ENCODE measurements at regions of chrX and their contacts with region 1.

Region 1: GRCh38 chrX:2643880-2644279 is 47.2 kb upstream of the CD99 start:
- DNase-seq: no peak
- H3K4me3 ChIP-seq: no peak overlapping the region
- H3K27ac ChIP-seq: no peak overlapping the region
- H3K4me1 ChIP-seq: no peaks in the 10 kb centered on the region
- H3K27me3 ChIP-seq: no peaks in the 10 kb centered on the region
- CTCF ChIP-seq: no peak

Region 2: GRCh38 chrX:2451501-2452316 is 192.2 kb before region 1 on chrX:
- intact Hi-C with region 1: no loop called
- DNase-seq: no peak
- H3K4me3 ChIP-seq: no peak overlapping the region
- H3K27ac ChIP-seq: no peak overlapping the region
- H3K4me1 ChIP-seq: no peaks in the 10 kb centered on the region
- H3K27me3 ChIP-seq: no peaks in the 10 kb centered on the region
- CTCF ChIP-seq: no peak

Region 3: GRCh38 chrX:2577844-2578506 is 65.9 kb before region 1 on chrX:
- intact Hi-C with region 1: no loop called
- DNase-seq: no peak
- H3K4me3 ChIP-seq: no peak overlapping the region
- H3K27ac ChIP-seq: no peak overlapping the region
- H3K4me1 ChIP-seq: no peaks in the 10 kb centered on the region
- H3K27me3 ChIP-seq: peaks cover 4% of the 10 kb centered on the region
- CTCF ChIP-seq: no peak

Region 4: GRCh38 chrX:2664502-2664901 is 20.6 kb after region 1 on chrX:
- intact Hi-C with region 1: no loop called
- DNase-seq: no peak
- H3K4me3 ChIP-seq: no peak overlapping the region
- H3K27ac ChIP-seq: no peak overlapping the region
- H3K4me1 ChIP-seq: no peaks in the 10 kb centered on the region
- H3K27me3 ChIP-seq: no peaks in the 10 kb centered on the region
- CTCF ChIP-seq: no peak

Region 5: GRCh38 chrX:2811271-2811670 is 167.4 kb after region 1 on chrX:
- intact Hi-C with region 1: loop called (anchors 2 kb)
- DNase-seq: peak in 1 of 2 donors; percentile 13
- H3K4me3 ChIP-seq: no peak overlapping the region
- H3K27ac ChIP-seq: no peak overlapping the region
- H3K4me1 ChIP-seq: no peaks in the 10 kb centered on the region
- H3K27me3 ChIP-seq: no peaks in the 10 kb centered on the region
- CTCF ChIP-seq: no peak